ENCODE measurements at regions of chr19 and their contacts with region 1.

Region 1: GRCh38 chr19:32224371-32225244 is 120.8 kb upstream of the ZNF507 start:
- DNase-seq: peak in 1 of 2 experiments; percentile 80
- H3K4me3 ChIP-seq: no peak overlapping the region
- H3K4me3 Mint-ChIP-seq: peak overlapping the region; percentile 49
- H3K27ac Mint-ChIP-seq: no peak overlapping the region
- H3K4me1 ChIP-seq: peaks cover 2% of the 10 kb centered on the region; the same call in 1 of the 2 replicates
- H3K4me1 Mint-ChIP-seq: no peaks in the 10 kb centered on the region
- H3K27me3 ChIP-seq: no peaks in the 10 kb centered on the region; the same call in 1 of the 2 replicates
- H3K27me3 Mint-ChIP-seq: peaks cover 32% of the 10 kb centered on the region
- CTCF ChIP-seq: peak; percentile 81 to 99

Region 2: DNA sequence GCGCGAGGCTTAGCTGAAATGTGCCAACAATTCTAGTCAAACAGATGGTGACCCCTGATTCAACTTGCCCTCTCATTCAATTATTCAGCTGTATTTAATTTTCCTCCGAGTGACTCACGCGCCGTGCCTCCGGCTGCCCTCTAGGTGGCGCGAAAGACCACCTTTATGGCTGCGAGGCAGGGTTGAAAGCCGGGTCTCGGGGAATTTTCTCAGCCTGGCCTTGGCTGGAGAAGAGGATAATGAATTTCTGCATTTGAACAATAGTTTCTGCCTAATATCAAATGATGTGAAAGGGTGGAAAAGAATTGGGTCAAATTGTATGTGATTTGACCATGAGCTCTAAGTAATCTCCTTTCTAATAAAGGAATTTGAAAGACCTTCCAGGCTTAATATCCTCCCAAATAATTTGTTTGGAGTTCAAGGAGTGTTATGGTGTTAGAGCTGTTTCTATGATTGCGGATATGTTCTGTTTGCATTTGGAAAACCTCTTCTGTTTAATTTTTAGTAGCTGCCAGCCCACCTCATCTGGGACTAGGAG is 1541.5 kb before region 1 on chr19:
- CTCF ChIA-PET with region 1: interaction called, 3 read pairs
- POLR2A ChIA-PET with region 1: no interaction called
- intact Hi-C with region 1: loop called (anchors 1 kb)
- DNase-seq: peak; percentile 61 to 75
- H3K4me3 ChIP-seq: no peak overlapping the region
- H3K4me3 Mint-ChIP-seq: no peak overlapping the region
- H3K27ac Mint-ChIP-seq: no peak overlapping the region
- H3K4me1 ChIP-seq: no peaks in the 10 kb centered on the region
- H3K4me1 Mint-ChIP-seq: no peaks in the 10 kb centered on the region
- H3K27me3 ChIP-seq: peaks cover 2% of the 10 kb centered on the region
- H3K27me3 Mint-ChIP-seq: peaks cover 24% of the 10 kb centered on the region
- CTCF ChIP-seq: peak; percentile 90

Region 3: GRCh38 chr19:32041681-32042292 is 182.8 kb before region 1 on chr19:
- CTCF ChIA-PET with region 1: no interaction called
- POLR2A ChIA-PET with region 1: no interaction called
- intact Hi-C with region 1: loop called (anchors 10 kb)
- DNase-seq: peak in 1 of 2 experiments; percentile 46
- H3K4me3 ChIP-seq: no peak overlapping the region
- H3K4me3 Mint-ChIP-seq: no peak overlapping the region
- H3K27ac Mint-ChIP-seq: no peak overlapping the region
- H3K4me1 ChIP-seq: no peaks in the 10 kb centered on the region
- H3K4me1 Mint-ChIP-seq: no peaks in the 10 kb centered on the region
- H3K27me3 ChIP-seq: no peaks in the 10 kb centered on the region
- H3K27me3 Mint-ChIP-seq: peaks cover 24% of the 10 kb centered on the region
- CTCF ChIP-seq: peak; percentile 52 to 67

Region 4: DNA sequence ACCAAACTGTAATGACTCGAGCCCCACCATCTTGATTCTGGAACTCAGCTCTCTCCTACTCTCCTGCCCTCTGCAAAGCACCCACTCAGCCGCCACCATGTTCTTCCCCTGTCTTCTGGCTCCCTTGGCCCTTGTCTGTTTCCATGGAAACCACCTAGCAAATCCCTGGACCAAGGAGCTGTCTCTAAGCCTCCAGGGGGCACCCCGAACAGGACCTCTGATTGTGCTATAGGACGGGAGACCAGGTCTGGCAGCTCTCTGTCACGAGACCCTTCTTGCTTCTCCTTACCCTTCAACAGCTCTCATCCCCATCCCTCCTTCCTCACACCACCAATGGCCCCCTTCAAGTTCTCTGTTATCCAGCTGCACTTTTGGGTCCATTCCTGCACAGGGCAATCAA is 156.9 kb before region 1 on chr19:
- CTCF ChIA-PET with region 1: no interaction called
- POLR2A ChIA-PET with region 1: no interaction called
- intact Hi-C with region 1: loop called (anchors 2 kb)
- DNase-seq: peak in 1 of 2 experiments; percentile 2
- H3K4me3 ChIP-seq: no peak overlapping the region
- H3K4me3 Mint-ChIP-seq: no peak overlapping the region
- H3K27ac Mint-ChIP-seq: no peak overlapping the region
- H3K4me1 ChIP-seq: no peaks in the 10 kb centered on the region
- H3K4me1 Mint-ChIP-seq: no peaks in the 10 kb centered on the region
- H3K27me3 ChIP-seq: no peaks in the 10 kb centered on the region; the same call in 1 of the 2 replicates
- H3K27me3 Mint-ChIP-seq: peaks cover 20% of the 10 kb centered on the region
- CTCF ChIP-seq: no peak

Region 5: GRCh38 chr19:32129141-32129540 is 95.5 kb before region 1 on chr19:
- CTCF ChIA-PET with region 1: no interaction called
- POLR2A ChIA-PET with region 1: no interaction called
- intact Hi-C with region 1: no loop called
- DNase-seq: no peak
- H3K4me3 ChIP-seq: no peak overlapping the region
- H3K4me3 Mint-ChIP-seq: no peak overlapping the region
- H3K27ac Mint-ChIP-seq: no peak overlapping the region
- H3K4me1 ChIP-seq: no peaks in the 10 kb centered on the region
- H3K4me1 Mint-ChIP-seq: no peaks in the 10 kb centered on the region
- H3K27me3 ChIP-seq: no peaks in the 10 kb centered on the region
- H3K27me3 Mint-ChIP-seq: peaks cover 14% of the 10 kb centered on the region
- CTCF ChIP-seq: no peak

Region 6: DNA sequence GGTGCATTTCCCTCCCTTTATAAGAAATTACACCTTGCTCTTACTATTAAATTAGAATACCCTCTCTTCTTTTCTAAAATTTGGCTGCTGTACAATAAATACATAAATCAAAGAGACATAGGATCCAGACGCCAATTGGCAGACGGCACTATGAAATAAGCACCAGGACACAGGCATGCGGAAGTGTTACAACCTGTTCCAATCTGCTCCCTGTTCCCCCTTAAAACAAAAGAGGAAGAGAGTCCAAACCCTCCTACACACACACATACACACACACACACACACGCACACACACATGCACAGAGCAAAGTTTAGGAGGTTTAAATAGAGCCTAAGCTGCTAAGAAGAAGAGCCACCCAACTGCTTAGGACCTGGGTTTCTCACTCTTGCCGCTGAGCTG is 45.2 kb after region 1 on chr19:
- CTCF ChIA-PET with region 1: no interaction called
- POLR2A ChIA-PET with region 1: no interaction called
- intact Hi-C with region 1: no loop called
- DNase-seq: no peak
- H3K4me3 ChIP-seq: no peak overlapping the region
- H3K4me3 Mint-ChIP-seq: no peak overlapping the region
- H3K27ac Mint-ChIP-seq: no peak overlapping the region
- H3K4me1 ChIP-seq: no peaks in the 10 kb centered on the region
- H3K4me1 Mint-ChIP-seq: no peaks in the 10 kb centered on the region
- H3K27me3 ChIP-seq: no peaks in the 10 kb centered on the region
- H3K27me3 Mint-ChIP-seq: peaks cover 28% of the 10 kb centered on the region
- CTCF ChIP-seq: no peak

Region 7: GRCh38 chr19:32421589-32422361 is 197.2 kb after region 1 on chr19:
- CTCF ChIA-PET with region 1: no interaction called
- POLR2A ChIA-PET with region 1: no interaction called
- intact Hi-C with region 1: no loop called
- DNase-seq: no peak
- H3K4me3 ChIP-seq: no peak overlapping the region
- H3K4me3 Mint-ChIP-seq: no peak overlapping the region
- H3K27ac Mint-ChIP-seq: no peak overlapping the region
- H3K4me1 ChIP-seq: no peaks in the 10 kb centered on the region
- H3K4me1 Mint-ChIP-seq: peaks cover 7% of the 10 kb centered on the region
- H3K27me3 ChIP-seq: no peaks in the 10 kb centered on the region
- H3K27me3 Mint-ChIP-seq: no peaks in the 10 kb centered on the region
- CTCF ChIP-seq: no peak